Naive thymus-derived CD4-positive, alpha-beta T cell (primary cell): ENCODE measurements at regions of chr14 and their contacts with region 1.

Region 1: DNA sequence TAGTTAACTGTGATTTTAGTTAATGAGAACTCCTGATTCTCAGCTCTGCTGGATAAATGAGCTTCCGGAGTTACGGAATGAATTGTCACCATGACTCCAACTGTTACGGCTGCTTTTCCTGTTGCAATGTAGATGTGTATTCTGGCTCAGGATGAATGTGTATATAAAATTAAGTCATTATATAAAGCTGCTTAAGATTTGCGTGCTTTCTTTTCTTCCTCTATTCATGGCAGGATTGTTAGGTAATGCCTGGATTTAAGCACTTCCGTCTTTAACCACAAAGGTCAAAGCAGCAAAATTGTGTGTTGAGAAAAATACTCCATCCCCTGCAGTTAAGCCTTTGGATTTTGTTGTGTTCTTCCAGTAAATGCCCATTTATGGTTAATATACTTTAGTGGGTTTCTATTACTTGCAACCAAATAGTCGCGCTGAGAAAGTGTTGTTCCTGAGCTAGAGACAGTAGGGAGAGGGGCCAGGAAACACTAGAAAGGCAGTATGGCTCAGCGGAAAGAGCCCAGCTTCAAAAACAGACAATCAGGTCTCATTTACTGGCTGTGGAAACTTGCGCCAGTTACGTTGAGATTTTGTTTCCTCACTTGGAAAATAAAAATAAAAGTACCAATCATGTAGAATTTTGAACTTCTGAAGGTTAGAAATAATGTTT is 9.4 kb upstream of the CCDC175 start:
- DNase-seq: peak in 2 of 9 donors; percentile 4 to 7
- ATAC-seq: peak; percentile 49
- H3K4me3 ChIP-seq: peak overlapping the region; percentile 4
- H3K4me3 Mint-ChIP-seq: peak overlapping the region; percentile 39 to 89 (median 78)
- H3K27ac ChIP-seq: no peak overlapping the region
- H3K27ac Mint-ChIP-seq: peak overlapping the region in 1 of 9 donors; percentile 41
- H3K4me1 ChIP-seq: peaks cover 0 to 4% of the 10 kb centered on the region in 2 donors
- H3K4me1 Mint-ChIP-seq: peaks cover 6 to 24% (median 13%) of the 10 kb centered on the region in 7 donors
- H3K27me3 ChIP-seq: no peaks in the 10 kb centered on the region
- H3K27me3 Mint-ChIP-seq: peaks cover 0 to 5% (median 0%) of the 10 kb centered on the region in 5 donors

Region 2: GRCh38 chr14:59918824-59919569 is 333.0 kb after region 1 on chr14:
- CTCF ChIA-PET with region 1: no interaction called
- POLR2A ChIA-PET with region 1: no interaction called
- intact Hi-C with region 1: loop called in 1 of 2 experiments (anchors 2 kb)
- DNase-seq: peak in 4 of 9 donors; percentile 7 to 23 (median 19)
- ATAC-seq: peak; percentile 54
- H3K4me3 ChIP-seq: peak overlapping the region; percentile 47
- H3K4me3 Mint-ChIP-seq: peak overlapping the region; percentile 47 to 81 (median 76)
- H3K27ac ChIP-seq: no peak overlapping the region
- H3K27ac Mint-ChIP-seq: no peak overlapping the region
- H3K4me1 ChIP-seq: peaks cover 3 to 7% of the 10 kb centered on the region in 2 donors
- H3K4me1 Mint-ChIP-seq: peaks cover 0 to 19% (median 8%) of the 10 kb centered on the region in 7 donors
- H3K27me3 ChIP-seq: peaks cover 0 to 3% of the 10 kb centered on the region in 2 donors
- H3K27me3 Mint-ChIP-seq: peaks cover 34 to 65% (median 56%) of the 10 kb centered on the region in 5 donors